ENCODE measurements at regions of chr17 and their contacts with region 1.

Region 1: GRCh38 chr17:30336369-30337171 is 2.7 kb upstream of the TMIGD1 start:
- DNase-seq: peak; percentile 78
- H3K4me3 Mint-ChIP-seq: no peak overlapping the region
- H3K27ac Mint-ChIP-seq: no peak overlapping the region
- H3K4me1 Mint-ChIP-seq: peaks cover 37% of the 10 kb centered on the region
- H3K27me3 Mint-ChIP-seq: no peaks in the 10 kb centered on the region

Region 2: DNA sequence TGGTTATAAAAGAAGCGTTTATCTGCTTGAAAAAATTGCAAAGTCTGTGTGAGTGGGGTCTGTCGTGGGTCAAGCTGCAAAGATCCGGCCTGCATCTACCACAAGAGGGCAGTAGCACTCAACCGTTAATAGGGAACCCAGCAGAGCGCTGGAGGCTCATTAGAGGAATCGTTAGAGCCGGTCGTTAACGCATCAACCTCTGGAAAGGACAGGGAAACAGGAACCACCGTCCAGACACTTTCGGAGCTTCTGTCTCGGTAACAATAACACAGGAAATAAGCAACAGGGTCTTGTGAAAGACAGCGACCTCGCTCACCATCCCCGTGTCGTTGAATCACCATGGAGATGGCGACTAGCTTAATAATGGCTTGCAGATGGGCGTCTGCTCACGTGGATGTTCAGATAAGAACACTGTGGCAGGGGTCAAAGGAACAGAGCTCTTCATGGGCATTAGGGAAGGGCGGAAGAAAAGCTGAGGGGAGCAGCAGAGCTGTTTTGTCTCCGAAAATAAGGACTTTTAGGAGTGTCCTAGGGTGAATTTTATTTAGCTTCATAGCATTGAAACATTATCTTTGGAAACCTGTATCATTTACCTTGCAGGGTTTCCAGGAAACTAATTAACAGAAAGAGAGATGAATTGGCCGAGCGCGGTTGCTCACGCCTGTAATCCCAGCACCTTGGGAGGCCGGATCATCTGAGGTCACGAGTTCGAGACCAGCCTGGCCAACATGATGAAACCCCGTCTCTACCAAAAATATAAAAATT is 231.8 kb before region 1 on chr17:
- CTCF ChIA-PET with region 1: interaction called, 182 read pairs
- intact Hi-C with region 1: loop called (anchors 1 kb)
- DNase-seq: peak; percentile 84
- H3K4me3 Mint-ChIP-seq: peak overlapping the region; percentile 75
- H3K27ac Mint-ChIP-seq: no peak overlapping the region
- H3K4me1 Mint-ChIP-seq: peaks cover 5% of the 10 kb centered on the region
- H3K27me3 Mint-ChIP-seq: no peaks in the 10 kb centered on the region

Region 3: DNA sequence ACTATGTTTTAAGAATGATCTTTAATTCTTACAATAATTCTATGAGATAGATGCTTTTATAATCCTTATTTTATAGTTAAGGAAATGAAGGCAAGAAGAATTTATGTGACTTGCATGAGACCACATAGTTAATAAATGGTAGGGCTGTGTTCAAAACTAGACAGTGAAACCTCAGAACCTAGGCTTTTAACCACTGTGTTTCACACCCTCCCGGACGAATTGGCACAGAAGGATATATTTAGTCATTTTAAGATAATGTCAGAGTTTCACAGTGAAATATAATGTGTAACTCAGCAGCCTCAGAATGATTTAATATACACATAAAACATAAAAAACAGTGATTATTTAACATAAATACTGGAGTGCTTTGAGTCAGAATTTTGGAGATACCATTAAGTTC is 162.9 kb before region 1 on chr17:
- CTCF ChIA-PET with region 1: interaction called, 8 read pairs
- intact Hi-C with region 1: loop called (anchors 2 kb)
- DNase-seq: peak; percentile 35
- H3K4me3 Mint-ChIP-seq: no peak overlapping the region
- H3K27ac Mint-ChIP-seq: no peak overlapping the region
- H3K4me1 Mint-ChIP-seq: peaks cover 23% of the 10 kb centered on the region
- H3K27me3 Mint-ChIP-seq: no peaks in the 10 kb centered on the region

Region 4: DNA sequence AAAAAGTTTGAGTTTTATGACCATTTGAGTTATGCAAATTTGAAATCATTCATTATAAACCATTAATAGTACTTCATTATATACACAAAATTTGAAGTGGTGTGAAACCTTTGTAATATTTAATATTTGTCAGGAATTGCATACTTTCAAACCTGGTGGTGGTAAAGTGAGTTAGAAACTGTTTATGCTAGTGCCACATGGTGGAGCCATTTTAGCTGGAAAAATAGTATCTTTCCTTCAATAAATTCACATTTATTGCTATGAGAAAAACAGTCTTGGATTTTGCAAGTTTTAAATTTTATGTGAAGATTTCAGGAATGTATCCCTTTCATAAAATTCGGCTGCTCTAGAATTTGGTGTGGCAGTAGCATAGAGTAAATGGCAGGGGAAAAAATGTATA is 37.6 kb before region 1 on chr17:
- CTCF ChIA-PET with region 1: interaction called, 8 read pairs
- intact Hi-C with region 1: loop called (anchors 1 kb)
- DNase-seq: no peak
- H3K4me3 Mint-ChIP-seq: no peak overlapping the region
- H3K27ac Mint-ChIP-seq: no peak overlapping the region
- H3K4me1 Mint-ChIP-seq: peaks cover 7% of the 10 kb centered on the region
- H3K27me3 Mint-ChIP-seq: no peaks in the 10 kb centered on the region

Region 5: GRCh38 chr17:30372755-30373154 is 36.2 kb after region 1 on chr17:
- CTCF ChIA-PET with region 1: interaction called, 8 read pairs
- intact Hi-C with region 1: loop called (anchors 2 kb)
- DNase-seq: peak; percentile 73
- H3K4me3 Mint-ChIP-seq: no peak overlapping the region
- H3K27ac Mint-ChIP-seq: peak overlapping the region; percentile 68
- H3K4me1 Mint-ChIP-seq: peaks cover 62% of the 10 kb centered on the region
- H3K27me3 Mint-ChIP-seq: no peaks in the 10 kb centered on the region

Region 6: GRCh38 chr17:30468465-30468864 is 131.9 kb after region 1 on chr17:
- CTCF ChIA-PET with region 1: no interaction called
- intact Hi-C with region 1: no loop called
- DNase-seq: no peak
- H3K4me3 Mint-ChIP-seq: no peak overlapping the region
- H3K27ac Mint-ChIP-seq: no peak overlapping the region
- H3K4me1 Mint-ChIP-seq: no peaks in the 10 kb centered on the region
- H3K27me3 Mint-ChIP-seq: peaks cover 2% of the 10 kb centered on the region

Region 7: GRCh38 chr17:30824356-30825145 is 488.0 kb after region 1 on chr17 and contains the start of gene CRLF3:
- CTCF ChIA-PET with region 1: no interaction called
- intact Hi-C with region 1: loop called (anchors 1 kb)
- DNase-seq: peak; percentile 91
- H3K4me3 Mint-ChIP-seq: peak within 1 kb of the TSS; percentile 85
- H3K27ac Mint-ChIP-seq: peak within 1 kb of the TSS; percentile 94
- H3K4me1 Mint-ChIP-seq: peaks cover 39% of the 10 kb centered on the region
- H3K27me3 Mint-ChIP-seq: no peaks in the 10 kb centered on the region
- total RNA-seq, gene CRLF3: 47.1 to 47.7 TPM